ENCODE measurements at regions of chr11 and their contacts with region 1.

Region 1: DNA sequence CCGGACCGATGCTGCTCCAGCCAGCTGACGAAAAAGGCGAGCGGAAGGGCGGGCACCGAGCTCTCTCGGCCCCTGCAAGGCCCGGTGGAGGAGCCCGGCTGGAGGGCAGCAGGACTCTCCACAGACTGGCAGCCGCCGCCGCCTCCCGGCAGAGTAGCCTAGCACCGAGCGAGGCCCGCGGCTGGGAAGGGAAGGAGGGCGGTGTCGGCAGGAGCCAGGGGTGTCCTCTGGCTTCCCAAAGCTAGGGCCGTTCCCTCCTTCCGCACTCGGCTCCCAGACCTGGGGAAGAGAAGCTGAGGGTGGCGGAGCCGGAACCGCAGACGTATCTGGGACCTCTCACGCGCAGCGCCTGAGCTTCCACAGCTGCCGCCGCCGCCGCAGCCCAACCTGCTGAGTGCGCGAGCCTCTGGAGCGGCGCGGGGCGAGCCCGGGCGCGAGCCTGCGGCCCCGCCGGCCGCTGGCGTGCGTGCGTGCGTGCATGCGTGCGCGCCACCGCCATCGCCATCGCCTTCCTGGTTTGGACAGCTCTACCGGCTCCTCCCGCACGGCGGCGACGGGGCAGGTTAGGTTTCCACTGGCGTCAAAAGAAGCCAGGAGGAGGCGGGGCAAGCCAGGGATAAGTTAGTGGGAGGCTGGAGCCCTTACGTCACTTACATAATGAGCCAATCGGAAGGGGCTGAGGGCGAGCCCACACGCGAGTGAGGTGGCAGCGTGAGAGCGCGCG is at the start of gene RAB6A:
- DNase-seq: peak; percentile 100
- H3K4me3 ChIP-seq: peak within 1 kb of the TSS; percentile 86
- H3K27ac ChIP-seq: peak within 1 kb of the TSS; percentile 34
- H3K4me1 ChIP-seq: peaks cover 22% of the 10 kb centered on the region
- CTCF ChIP-seq: peak; percentile 53
- total RNA-seq, gene RAB6A: 45.3 and 46.5 TPM in 2 replicates

Region 2: DNA sequence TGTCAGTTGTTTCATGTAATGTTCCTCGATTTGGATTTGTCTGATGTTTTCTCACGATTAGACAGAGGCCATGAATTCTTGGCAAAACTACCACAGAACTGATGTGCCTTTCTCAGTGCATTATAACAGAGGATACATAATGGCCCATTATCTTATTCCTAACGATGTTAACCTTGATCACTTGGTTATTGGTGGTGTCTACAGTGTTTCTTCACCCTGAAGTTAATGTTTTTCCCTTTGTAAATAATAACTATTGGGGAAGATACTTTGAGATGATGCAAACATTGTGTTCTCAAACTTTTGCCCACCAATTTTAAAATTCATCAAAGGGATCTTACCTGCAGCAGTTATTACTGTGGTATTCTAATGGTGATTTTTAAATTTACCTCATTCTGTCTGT is 13.1 kb before region 1 on chr11:
- CTCF ChIA-PET with region 1: no interaction called
- POLR2A ChIA-PET with region 1: interaction called, 11 read pairs
- intact Hi-C with region 1: no loop called
- DNase-seq: no peak
- H3K4me3 ChIP-seq: no peak overlapping the region
- H3K27ac ChIP-seq: no peak overlapping the region
- H3K4me1 ChIP-seq: peaks cover 8% of the 10 kb centered on the region
- CTCF ChIP-seq: no peak

Region 3: DNA sequence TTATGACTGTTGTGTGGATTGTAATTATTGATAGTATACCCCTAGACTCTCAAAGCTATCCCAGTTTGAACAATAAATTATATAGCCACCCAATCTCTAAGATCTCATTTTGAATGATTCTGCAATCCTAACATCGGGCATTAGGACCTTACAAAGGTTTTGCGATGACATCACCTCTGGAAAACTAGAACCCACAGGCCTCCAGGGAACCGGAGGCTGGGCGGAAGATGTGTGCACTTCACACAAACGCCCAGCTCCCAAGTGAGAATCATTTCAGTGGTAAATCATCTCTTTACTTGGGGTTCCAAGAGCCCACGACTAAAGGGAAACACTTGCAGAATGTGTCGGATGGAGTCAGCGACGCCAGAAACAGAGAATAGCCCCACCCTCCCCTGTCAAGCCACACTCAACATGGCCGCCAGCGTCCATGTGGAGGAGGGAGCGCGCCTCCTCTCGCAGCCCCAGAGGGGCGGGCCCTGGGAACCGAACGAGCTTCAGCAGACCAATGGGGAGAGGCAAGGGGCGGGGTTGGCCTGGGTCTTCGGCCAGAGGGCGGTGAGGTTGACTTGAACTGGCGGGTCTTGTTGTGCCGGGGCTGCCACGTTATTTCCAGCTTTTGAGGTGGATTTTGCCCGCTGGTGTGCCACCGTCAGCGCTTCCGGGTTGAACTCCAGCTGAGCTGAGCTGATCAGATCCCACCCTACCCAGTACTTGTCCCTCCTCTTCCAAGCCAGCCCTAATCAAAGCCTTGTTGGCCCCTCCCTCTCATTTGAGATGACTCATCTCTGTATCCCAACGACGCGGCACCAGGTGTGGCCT is 18.5 kb after region 1 on chr11:
- CTCF ChIA-PET with region 1: interaction called, 3 read pairs
- POLR2A ChIA-PET with region 1: interaction called, 52 read pairs
- intact Hi-C with region 1: loop called (anchors 1 kb)
- DNase-seq: peak; percentile 98
- H3K4me3 ChIP-seq: peak overlapping the region; percentile 69
- H3K27ac ChIP-seq: peak overlapping the region; percentile 78
- H3K4me1 ChIP-seq: peaks cover 23% of the 10 kb centered on the region
- CTCF ChIP-seq: no peak

Region 4: DNA sequence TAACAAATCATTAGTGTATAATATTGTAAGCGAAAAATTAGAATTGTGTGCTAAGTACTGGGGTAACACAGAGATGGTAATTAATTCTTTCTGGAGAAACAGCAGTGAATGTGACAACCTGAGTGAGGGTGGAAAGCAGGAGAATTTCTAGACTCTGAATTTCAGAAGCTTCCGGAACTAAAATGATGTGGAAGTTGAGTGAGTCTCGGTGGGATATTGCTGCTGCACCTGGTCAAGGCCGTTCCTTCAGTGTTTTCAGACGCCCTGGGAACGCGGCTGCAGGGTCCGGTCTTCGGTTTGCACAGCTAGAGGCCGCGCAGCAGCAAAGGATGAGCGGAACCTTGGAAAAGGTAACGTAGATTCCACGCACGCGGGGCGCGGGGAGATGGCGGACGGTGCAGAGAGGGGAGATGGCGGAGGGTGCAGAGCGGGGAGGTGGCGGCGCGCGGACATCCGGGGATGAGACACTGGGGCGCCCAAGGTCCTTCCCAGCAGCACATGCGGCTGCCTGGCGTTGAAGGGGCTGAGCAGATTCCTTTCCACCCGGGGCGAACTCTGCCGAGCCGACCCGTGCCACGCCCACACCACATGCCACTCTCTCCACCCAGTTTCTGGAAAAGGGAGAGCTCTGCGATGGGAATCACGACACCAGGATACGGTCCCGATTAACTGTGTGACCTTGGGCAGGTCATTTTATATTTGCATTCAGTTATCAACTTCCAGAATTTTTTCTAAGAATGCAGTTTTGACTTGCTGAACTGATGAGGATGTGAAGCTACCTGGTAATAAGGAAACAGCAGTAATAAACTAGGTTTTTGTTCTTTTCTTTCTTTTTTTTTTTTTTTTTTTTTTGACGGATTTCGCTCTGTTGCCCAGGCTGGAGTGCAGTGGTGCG is 27.0 kb after region 1 on chr11 and contains the start of gene MRPL48:
- CTCF ChIA-PET with region 1: interaction called, 3 read pairs
- POLR2A ChIA-PET with region 1: interaction called, 5 read pairs
- intact Hi-C with region 1: loop called (anchors 1 kb)
- DNase-seq: peak; percentile 92
- H3K4me3 ChIP-seq: peak within 1 kb of the TSS; percentile 77
- H3K27ac ChIP-seq: peak within 1 kb of the TSS; percentile 92
- H3K4me1 ChIP-seq: peaks cover 49% of the 10 kb centered on the region
- CTCF ChIP-seq: no peak
- total RNA-seq, gene MRPL48: 167 and 180 TPM in 2 replicates

Region 5: DNA sequence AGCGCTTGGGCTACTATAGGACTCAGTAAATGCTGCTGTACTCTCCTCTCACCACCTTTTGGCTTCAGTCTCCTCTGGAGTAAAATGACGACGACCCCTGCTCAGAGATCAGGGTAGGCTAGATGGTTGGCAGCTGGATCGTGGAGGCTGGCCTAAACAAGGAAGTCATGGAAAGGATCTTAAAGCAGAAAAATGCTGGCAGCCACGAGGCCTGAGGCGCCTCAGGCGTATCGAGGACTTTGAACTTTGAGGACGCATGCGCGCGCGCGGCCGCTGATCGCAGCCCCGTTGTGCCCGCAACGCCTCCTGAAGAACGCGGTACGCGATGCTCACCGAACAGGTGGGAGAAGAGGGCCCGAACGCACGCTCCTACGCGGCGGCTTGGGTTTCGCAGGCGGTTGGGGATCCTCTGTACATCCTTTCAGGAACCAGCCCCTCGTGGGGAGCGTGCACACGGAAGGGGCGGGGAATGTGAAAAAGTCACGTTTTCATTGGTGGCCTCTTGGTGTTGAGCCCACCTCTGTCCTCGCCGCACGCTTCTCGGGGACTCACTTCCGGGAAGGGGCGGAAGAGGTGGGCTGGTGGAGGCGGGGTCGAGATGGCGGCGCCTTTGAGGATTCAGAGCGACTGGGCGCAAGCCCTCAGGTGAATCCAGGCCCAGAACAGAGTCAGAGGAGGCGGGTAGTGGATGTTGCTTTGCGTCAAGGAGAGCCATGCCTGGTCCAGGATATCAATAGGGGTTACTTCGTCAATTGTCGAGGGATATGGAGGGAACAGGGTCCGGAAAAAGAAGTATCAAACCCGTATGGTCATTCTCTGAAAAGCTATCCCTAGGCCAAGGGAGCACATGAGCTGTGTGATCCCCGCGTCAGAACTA is 115.8 kb after region 1 on chr11 and contains the starts of genes COA4 and PAAF1:
- CTCF ChIA-PET with region 1: no interaction called
- POLR2A ChIA-PET with region 1: interaction called, 3 read pairs
- intact Hi-C with region 1: loop called (anchors 1 kb)
- DNase-seq: peak; percentile 99
- H3K4me3 ChIP-seq: peak within 1 kb of the TSS; percentile 95
- H3K27ac ChIP-seq: peak within 1 kb of the TSS; percentile 92
- H3K4me1 ChIP-seq: peaks cover 26% of the 10 kb centered on the region
- CTCF ChIP-seq: no peak
- total RNA-seq, gene COA4: 153 and 171 TPM in 2 replicates
- total RNA-seq, gene PAAF1: 11.2 and 12.3 TPM in 2 replicates

Region 6: DNA sequence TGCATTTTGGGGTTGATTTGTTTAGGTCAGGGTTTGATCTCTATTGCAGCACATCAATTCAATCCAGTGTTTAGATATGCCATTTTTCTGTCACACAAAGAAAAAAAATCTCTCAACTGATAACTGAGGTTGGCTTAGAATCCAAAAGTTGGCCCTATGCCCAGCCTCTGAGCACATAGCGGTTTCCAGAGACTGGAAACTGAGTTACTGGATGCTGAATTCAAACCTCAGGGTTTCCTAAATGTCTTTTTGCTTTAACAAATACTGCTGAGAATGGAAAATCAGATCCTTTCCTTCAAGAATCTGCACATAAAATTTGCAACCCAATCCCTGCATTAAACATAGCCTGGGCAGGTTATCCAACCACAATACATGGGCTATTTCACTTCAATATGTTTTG is 546.6 kb after region 1 on chr11:
- CTCF ChIA-PET with region 1: no interaction called
- POLR2A ChIA-PET with region 1: no interaction called
- intact Hi-C with region 1: no loop called
- DNase-seq: no peak
- H3K4me3 ChIP-seq: no peak overlapping the region
- H3K27ac ChIP-seq: no peak overlapping the region
- H3K4me1 ChIP-seq: no peaks in the 10 kb centered on the region
- CTCF ChIP-seq: no peak